Ascending aorta (tissue), 2 donors: ENCODE measurements at regions of chr2 and their contacts with region 1.

Region 1: GRCh38 chr2:71685078-71685848 is 231.9 kb downstream of the DYSF start:
- DNase-seq: no peak
- H3K4me3 ChIP-seq: no peak overlapping the region
- H3K27ac ChIP-seq: peak overlapping the region; percentile 37 to 63
- H3K4me1 ChIP-seq: peaks cover 3% of the 10 kb centered on the region in 2 donors
- H3K27me3 ChIP-seq: no peaks in the 10 kb centered on the region
- CTCF ChIP-seq: no peak

Region 2: GRCh38 chr2:71006955-71007799 is 678.1 kb before region 1 on chr2:
- intact Hi-C with region 1: no loop called
- DNase-seq: peak in 1 of 2 donors; percentile 35
- H3K4me3 ChIP-seq: no peak overlapping the region
- H3K27ac ChIP-seq: no peak overlapping the region
- H3K4me1 ChIP-seq: no peaks in the 10 kb centered on the region
- H3K27me3 ChIP-seq: no peaks in the 10 kb centered on the region
- CTCF ChIP-seq: no peak

Region 3: DNA sequence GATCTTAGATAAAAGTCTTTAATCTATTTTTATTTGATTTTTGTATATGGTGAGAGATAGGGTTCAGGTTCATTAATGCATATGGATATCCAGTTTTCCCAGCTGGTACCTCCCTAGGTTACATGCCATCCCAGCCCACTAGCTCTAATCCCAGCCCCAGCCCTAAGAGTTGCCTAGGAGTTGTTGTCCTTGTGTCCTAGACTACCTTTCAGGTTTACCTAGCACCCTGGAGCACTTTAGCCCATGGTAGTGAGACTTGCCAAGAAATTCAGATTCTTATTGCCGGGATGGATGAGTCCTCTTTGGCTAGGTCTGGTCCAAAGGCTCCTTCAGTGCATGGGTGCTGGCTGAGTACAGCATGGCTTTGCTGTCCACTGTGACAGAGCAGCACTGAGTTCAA is 313.2 kb before region 1 on chr2:
- intact Hi-C with region 1: no loop called
- DNase-seq: no peak
- H3K4me3 ChIP-seq: no peak overlapping the region
- H3K27ac ChIP-seq: no peak overlapping the region
- H3K4me1 ChIP-seq: no peaks in the 10 kb centered on the region
- H3K27me3 ChIP-seq: no peaks in the 10 kb centered on the region
- CTCF ChIP-seq: no peak

Region 4: DNA sequence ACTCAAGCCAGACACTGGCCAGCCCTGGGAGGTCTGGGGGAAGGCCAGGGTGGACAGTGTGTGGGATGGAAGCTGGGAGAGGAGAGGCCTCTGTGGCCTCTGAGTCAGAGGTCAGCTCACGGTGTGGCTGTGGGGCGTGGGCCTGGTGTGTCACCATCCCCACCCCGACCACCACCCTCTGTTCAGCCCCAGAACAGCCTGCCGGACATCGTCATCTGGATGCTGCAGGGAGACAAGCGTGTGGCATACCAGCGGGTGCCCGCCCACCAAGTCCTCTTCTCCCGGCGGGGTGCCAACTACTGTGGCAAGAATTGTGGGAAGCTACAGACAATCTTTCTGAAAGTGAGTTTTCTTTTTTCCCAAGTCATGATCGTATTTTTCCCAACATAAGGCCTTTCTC is 121.4 kb before region 1 on chr2:
- intact Hi-C with region 1: loop called (anchors 5 kb)
- DNase-seq: no peak
- H3K4me3 ChIP-seq: no peak overlapping the region
- H3K27ac ChIP-seq: peak overlapping the region in 1 of 2 donors; percentile 73
- H3K4me1 ChIP-seq: peaks cover 3 to 30% of the 10 kb centered on the region in 2 donors
- H3K27me3 ChIP-seq: no peaks in the 10 kb centered on the region
- CTCF ChIP-seq: no peak

Region 5: GRCh38 chr2:71897137-71897480 is 211.8 kb after region 1 on chr2:
- intact Hi-C with region 1: no loop called
- DNase-seq: no peak
- H3K4me3 ChIP-seq: no peak overlapping the region
- H3K27ac ChIP-seq: no peak overlapping the region
- H3K4me1 ChIP-seq: no peaks in the 10 kb centered on the region
- H3K27me3 ChIP-seq: no peaks in the 10 kb centered on the region
- CTCF ChIP-seq: no peak